Ovary (tissue), 10 donors: ENCODE measurements at regions of chr17 and their contacts with region 1.

Region 1: GRCh38 chr17:57559634-57560318 is 185.3 kb downstream of the CCDC182 start:
- DNase-seq: no peak
- H3K4me3 ChIP-seq: no peak overlapping the region
- H3K27ac ChIP-seq: no peak overlapping the region
- H3K4me1 ChIP-seq: peaks cover 4% of the 10 kb centered on the region
- H3K27me3 ChIP-seq: no peaks in the 10 kb centered on the region
- CTCF ChIP-seq: no peak
- EP300 ChIP-seq: no peak
- POLR2A ChIP-seq: no peak

Region 2: DNA sequence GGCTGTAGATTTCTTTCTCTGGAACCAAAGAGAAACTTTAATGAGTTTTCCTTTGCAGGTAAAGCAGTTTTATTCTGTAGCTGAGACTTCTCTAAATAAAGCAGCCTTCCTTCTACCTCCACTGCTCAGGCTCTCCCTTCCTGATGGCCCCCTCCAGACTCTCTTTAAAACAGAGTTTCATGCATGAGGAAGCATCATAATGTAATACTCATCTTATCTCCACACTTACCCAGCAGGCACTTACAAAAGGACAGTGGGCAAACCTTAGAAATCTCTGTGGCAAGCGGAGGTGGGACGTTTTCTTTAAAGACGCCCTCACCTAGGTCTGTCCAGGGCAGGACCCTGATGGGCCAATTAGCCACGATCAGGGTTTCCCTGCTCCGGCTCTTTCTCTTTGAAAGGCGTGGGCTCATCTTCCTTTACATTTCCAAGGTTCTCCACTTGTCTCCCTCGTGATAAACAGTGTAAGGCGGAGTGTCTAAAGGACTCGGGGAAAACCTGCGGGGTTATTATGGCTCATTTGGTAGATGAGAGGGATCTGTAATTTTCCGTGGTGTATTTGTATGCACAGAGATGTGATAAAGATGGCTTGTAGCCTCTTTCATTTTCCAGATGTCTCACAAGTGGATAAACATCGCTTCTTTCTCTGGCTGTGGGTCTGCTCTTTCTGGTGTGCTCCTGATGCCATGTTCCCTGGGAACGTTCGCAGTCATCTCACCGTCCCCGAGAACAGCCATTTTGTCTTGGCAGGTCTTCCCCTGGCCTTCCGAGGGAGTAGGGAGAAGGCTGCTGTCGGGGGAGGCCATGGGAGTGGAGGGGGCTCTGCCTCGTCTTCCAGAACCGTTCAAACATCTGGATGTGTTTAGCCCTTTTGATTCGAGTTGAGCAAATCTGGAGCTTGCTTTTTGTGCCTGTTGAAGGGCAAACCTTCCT is 53.7 kb before region 1 on chr17:
- intact Hi-C with region 1: no loop called
- DNase-seq: no peak
- H3K4me3 ChIP-seq: no peak overlapping the region
- H3K27ac ChIP-seq: peak overlapping the region; percentile 66 to 84
- H3K4me1 ChIP-seq: peaks cover 20% of the 10 kb centered on the region
- H3K27me3 ChIP-seq: no peaks in the 10 kb centered on the region
- CTCF ChIP-seq: no peak
- EP300 ChIP-seq: no peak
- POLR2A ChIP-seq: no peak

Region 3: DNA sequence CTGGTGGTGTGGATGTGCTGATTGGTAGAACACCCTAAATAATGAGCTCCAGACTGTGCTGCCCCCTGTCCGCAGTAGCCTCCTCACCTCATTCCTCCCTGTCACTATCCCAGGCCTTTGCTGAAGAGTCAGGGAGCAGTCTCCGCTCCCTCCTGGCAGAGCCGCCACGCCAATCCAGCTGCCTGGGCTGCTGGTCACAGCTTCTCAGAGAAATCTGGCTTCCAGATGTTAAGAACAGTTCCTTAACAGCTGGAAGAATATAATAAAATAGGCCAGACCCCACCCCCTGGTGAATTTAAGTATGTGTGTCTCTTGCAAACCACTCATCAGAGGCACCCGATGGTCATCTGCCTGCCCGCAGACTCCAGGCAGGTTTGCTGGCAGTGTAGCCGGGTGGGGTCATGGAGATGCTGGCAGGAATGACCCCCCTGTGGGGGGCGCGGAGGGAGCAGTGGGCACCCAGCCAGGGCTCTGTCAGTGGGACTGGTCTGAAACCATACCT is 24.3 kb after region 1 on chr17:
- intact Hi-C with region 1: no loop called
- DNase-seq: no peak
- H3K4me3 ChIP-seq: no peak overlapping the region
- H3K27ac ChIP-seq: no peak overlapping the region
- H3K4me1 ChIP-seq: peaks cover 13% of the 10 kb centered on the region
- H3K27me3 ChIP-seq: no peaks in the 10 kb centered on the region
- CTCF ChIP-seq: no peak
- EP300 ChIP-seq: no peak
- POLR2A ChIP-seq: no peak

Region 4: DNA sequence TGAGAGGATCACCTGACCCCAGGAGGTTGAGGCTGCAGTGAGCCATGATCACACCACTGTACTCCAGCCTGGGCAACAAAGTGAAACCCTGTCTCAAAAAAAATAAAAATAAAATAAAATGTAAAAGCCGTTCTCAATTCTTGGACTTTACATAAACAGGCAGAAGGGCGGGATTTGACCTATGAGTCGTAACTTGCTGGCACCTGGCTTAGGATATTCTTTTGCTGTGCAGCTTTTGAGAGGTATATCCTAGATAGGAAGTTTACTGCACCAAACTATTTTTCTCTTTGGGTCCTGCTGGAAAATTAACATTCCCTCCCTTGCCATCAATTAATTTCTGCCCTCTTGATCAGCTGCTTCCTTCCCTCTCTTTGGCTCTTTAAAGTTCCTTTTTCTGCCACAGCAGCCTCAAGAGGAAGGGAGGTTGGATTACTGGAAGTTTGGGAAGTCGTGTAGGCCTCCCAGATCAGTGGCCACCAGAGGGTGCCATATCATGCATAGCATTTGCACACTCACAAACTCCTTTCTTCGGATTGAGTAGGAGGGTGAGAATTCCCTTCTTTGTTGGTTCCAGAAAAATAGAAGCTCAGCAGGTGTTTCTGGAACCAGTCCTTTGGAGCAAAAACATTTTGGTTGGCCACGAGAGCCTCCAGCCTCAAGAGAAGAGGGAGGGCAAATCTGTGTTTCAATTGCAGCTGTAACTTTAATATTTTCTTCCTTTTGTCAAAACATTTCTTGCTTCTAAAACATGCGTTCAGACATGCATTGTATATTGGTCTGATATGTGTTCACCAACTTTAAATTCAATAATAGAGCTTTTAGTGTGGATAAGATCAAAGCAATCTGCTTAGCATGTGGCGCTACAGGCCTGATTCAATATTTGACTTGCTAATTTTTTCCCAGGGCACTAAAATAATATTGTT is 38.0 kb after region 1 on chr17:
- intact Hi-C with region 1: loop called in 1 of 4 experiments (anchors 1 kb)
- DNase-seq: peak; percentile 70 to 80 (median 76)
- H3K4me3 ChIP-seq: no peak overlapping the region
- H3K27ac ChIP-seq: no peak overlapping the region
- H3K4me1 ChIP-seq: peaks cover 8% of the 10 kb centered on the region
- H3K27me3 ChIP-seq: no peaks in the 10 kb centered on the region
- CTCF ChIP-seq: peak; percentile 59 to 73 (median 62)
- EP300 ChIP-seq: no peak
- POLR2A ChIP-seq: no peak

Region 5: GRCh38 chr17:57783106-57783742 is 223.4 kb after region 1 on chr17:
- intact Hi-C with region 1: no loop called
- DNase-seq: peak; percentile 61 to 81 (median 74)
- H3K4me3 ChIP-seq: no peak overlapping the region
- H3K27ac ChIP-seq: no peak overlapping the region
- H3K4me1 ChIP-seq: peaks cover 6% of the 10 kb centered on the region
- H3K27me3 ChIP-seq: no peaks in the 10 kb centered on the region
- CTCF ChIP-seq: peak; percentile 43 to 70 (median 55)
- EP300 ChIP-seq: no peak
- POLR2A ChIP-seq: no peak